Right ventricle myocardium superior (tissue), 1 donor: ENCODE measurements at regions of chr7 and their contacts with region 1.

Region 1: DNA sequence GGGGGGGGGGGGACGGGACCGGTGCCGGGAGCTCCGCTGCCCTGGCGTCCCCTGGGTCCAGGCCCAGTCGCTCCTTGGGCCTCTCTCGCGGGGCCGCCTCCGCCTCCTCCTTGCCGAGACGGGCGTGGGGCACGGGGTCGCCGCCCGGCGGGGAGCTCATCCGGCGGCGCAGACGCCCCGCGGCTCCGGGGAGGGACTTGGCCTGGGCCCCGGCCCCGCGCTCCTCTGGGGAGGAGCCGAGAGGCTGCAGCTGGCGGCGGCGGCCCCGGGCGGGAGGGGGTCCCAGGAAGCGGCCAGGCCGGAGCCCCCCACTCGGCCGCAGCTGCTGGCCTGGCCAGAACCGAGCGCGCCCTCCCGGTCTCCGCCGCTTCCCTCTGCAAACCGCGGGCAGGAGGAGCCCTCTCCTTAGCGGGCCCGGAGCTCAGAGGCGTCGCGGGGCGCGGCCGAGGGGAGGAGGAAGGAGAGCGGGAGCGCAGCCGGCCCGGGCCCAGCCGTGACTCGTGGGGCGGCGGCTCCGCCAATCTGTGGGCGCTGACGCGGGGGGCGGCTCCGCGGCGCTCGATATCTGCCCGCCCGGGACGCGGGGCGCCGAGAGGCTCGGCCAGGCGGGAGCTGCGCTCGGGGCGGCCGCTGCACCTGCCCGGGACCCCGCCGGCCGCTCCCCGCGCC is at the start of gene FAM20C:
- DNase-seq: peak; percentile 93
- ATAC-seq: peak; percentile 93
- total RNA-seq, gene FAM20C: 23.4 TPM

Region 2: DNA sequence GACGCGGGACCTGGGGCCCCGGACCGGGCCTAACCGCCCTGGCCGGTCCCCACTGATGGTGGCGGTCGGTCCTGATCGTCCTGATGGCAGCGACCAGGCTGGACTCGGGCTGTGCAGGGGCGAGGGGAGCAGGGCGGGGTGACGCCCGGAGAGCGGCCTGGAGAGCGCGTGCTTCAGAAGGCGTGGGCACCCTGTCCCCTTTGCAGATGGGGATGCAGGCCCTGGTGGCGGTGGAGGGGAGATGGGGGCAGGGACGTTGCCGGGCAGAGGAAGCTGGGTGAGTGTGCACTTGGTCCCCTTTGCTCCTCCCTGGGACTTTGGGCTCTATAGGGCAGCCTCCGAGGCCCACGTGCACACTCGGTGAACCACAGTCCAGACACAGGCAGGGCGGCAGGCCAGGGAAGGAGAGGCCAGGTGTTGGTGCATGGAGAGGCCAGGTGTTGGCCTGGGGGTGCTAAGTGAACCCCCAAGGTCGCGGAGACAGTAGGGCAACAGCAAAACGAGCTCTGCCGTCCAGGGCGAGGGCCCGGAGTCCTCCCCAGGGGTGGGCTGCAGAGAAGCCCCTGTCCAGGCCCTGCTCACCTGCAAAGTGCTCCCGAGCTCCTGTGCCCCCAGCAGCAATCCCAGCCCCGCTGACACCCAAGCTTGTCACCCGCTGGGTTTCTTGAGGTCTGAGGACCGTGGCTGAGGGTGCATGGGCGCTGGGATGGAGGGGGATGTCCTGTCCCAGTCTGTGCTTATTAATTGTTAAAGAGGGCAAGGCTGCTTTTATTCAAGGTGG is 42.1 kb before region 1 on chr7:
- intact Hi-C with region 1: loop called (anchors 5 kb)
- DNase-seq: peak; percentile 72
- ATAC-seq: peak; percentile 21

Region 3: GRCh38 chr7:668139-668931 is 476.2 kb after region 1 on chr7:
- intact Hi-C with region 1: no loop called
- DNase-seq: no peak
- ATAC-seq: peak; percentile 18